ENCODE measurements at regions of chr9 and their contacts with region 1.

Region 1: DNA sequence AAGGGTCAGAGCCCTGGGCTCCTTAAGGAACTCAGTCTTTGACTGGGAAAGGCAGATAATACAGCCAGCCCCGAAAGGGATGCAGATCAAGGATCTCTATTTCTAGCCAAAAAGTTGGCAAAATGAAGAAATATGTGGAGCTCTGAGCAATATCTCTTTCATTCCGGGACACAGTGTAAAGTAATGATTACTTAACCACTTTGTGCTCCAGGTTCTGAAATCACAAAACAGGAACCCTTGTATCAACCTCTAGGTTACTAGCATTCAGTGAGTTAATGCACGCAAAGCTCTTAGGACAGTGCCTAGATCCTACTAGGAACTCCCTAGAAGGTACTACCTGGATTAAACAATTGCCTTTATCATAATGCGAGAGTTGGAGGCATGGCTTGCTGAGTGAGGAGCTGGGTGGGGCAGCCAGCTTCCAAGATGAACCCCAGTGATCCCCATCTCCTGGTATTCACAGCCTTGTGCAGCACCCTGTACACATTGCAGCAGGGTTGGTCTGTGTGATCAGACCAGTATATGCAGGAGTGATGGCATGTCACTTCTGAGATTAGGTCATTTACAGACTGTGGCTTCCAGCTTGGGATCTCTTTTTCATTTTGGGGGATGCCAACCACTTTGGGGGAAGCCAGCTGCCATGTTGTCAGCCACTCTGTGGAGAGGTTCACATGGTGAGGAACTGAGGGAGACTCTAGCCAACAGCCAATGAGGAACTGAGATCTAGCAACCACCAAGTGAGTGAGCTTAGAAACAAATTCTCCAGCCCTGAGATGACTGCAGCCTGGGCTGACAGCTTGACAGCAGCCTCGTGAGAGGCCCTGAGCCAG is 103.1 kb upstream of the SLC44A1 start:
- DNase-seq: no peak

Region 2: GRCh38 chr9:105053209-105053652 is 88.1 kb before region 1 on chr9:
- intact Hi-C with region 1: loop called in 1 of 2 experiments (anchors 10 kb)
- DNase-seq: no peak

Region 3: GRCh38 chr9:105226055-105226454 is 84.7 kb after region 1 on chr9:
- intact Hi-C with region 1: loop called in 1 of 2 experiments (anchors 2 kb)
- DNase-seq: no peak